ENCODE measurements at regions of chr2 and their contacts with region 1.

Region 1: DNA sequence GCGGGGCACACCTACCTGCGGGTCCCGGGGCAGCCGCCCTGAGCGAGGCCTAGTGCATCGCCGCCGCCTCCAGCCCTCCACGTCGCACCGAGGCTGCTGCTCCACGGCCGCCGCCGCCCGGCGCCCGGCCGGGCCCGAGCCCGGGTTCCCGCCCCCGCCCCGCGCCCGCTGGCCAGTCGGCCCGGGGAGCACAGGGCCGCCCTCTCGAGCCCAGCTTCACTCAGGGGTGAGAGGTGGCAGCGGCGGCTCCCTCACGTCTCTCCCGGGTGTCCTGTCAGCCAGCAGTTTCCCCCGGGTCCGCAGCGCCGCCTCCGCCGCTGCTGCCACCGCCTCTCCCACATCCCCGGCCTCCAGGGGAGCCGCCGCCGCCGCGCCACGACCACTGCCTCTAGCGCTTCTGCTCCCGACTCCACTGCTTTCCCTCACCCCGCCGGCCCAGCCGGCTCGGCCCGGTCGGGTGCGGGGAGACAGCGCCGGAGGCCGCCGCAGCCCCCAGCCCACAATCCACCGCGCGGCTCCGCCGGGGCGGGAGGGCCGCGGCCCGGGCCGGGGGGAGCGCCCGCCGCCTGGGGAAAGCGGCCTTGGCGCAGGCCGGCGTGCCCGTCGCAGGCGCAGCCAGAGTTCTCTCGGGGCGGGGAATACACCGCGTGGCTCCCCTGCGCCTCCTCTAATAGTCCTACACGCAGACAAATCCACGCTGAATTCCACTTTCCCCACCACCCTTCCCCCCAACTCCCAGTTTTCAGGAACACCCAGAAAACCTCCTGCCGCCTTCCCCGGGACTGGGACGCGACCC is at the start of gene VPS54:
- DNase-seq: peak; percentile 65 to 81 (median 80)
- ATAC-seq: peak; percentile 91
- H3K4me3 ChIP-seq: peak within 1 kb of the TSS; percentile 68
- H3K27ac ChIP-seq: peak within 1 kb of the TSS; percentile 89
- H3K4me1 ChIP-seq: peaks cover 12 to 19% of the 10 kb centered on the region in 2 experiments
- H3K27me3 ChIP-seq: no peaks in the 10 kb centered on the region
- CTCF ChIP-seq: no peak
- EP300 ChIP-seq: no peak
- POLR2A ChIP-seq: peak; percentile 73
- RAD21 ChIP-seq: no peak
- polyA plus RNA-seq, gene VPS54: 4.9 to 6.1 TPM

Region 2: GRCh38 chr2:63841254-63842022 is 177.7 kb before region 1 on chr2 and contains the start of gene UGP2:
- CTCF ChIA-PET with region 1: no interaction called
- POLR2A ChIA-PET with region 1: no interaction called
- in situ Hi-C with region 1: no loop called
- intact Hi-C with region 1: loop called (anchors 5 kb)
- DNase-seq: peak; percentile 81 to 93 (median 84)
- ATAC-seq: peak; percentile 89
- H3K4me3 ChIP-seq: peak within 1 kb of the TSS; percentile 80
- H3K27ac ChIP-seq: peak within 1 kb of the TSS; percentile 96
- H3K4me1 ChIP-seq: peaks cover 10 to 18% of the 10 kb centered on the region in 2 experiments
- H3K27me3 ChIP-seq: no peaks in the 10 kb centered on the region
- CTCF ChIP-seq: peak in 2 of 3 experiments; percentile 10 to 36; a peak in 3 of 6 replicates
- EP300 ChIP-seq: no peak
- POLR2A ChIP-seq: peak; percentile 75
- RAD21 ChIP-seq: 0 out of 4 replicates have a peak, but pooled peaks of 1 of the 2 experiments have one; percentile 13
- polyA plus RNA-seq, gene UGP2: 58.9 to 59.6 TPM

Region 3: GRCh38 chr2:63977904-63978303 is 41.2 kb before region 1 on chr2:
- CTCF ChIA-PET with region 1: no interaction called
- POLR2A ChIA-PET with region 1: no interaction called
- in situ Hi-C with region 1: no loop called
- intact Hi-C with region 1: no loop called
- DNase-seq: no peak
- ATAC-seq: no peak
- H3K4me3 ChIP-seq: no peak overlapping the region
- H3K27ac ChIP-seq: no peak overlapping the region
- H3K4me1 ChIP-seq: no peaks in the 10 kb centered on the region; a peak in 1 of 5 replicates
- H3K27me3 ChIP-seq: no peaks in the 10 kb centered on the region
- CTCF ChIP-seq: no peak
- EP300 ChIP-seq: no peak
- POLR2A ChIP-seq: no peak
- RAD21 ChIP-seq: no peak

Region 4: DNA sequence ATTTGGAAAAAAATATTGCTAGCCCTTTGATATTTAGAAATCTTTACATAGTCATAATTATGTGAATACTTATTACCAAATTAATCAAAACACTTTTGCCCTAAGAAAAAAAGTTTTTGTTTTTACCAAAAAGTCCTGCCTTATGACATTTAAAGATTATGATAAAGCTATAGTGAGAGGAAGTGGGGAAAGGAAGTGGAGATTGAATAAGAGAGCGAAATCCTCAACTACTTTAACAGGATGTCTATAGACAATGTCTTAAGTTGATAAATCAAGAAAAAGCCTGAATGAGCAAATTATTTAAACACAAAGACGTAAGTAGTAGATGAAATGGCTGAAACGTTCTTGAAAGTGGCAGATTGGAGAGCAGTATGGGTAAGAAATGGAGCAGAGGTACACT is 21.0 kb after region 1 on chr2:
- CTCF ChIA-PET with region 1: no interaction called
- POLR2A ChIA-PET with region 1: no interaction called
- in situ Hi-C with region 1: no loop called
- intact Hi-C with region 1: no loop called
- DNase-seq: no peak
- ATAC-seq: no peak
- H3K4me3 ChIP-seq: no peak overlapping the region
- H3K27ac ChIP-seq: no peak overlapping the region
- H3K4me1 ChIP-seq: no peaks in the 10 kb centered on the region; a peak in 1 of 5 replicates
- H3K27me3 ChIP-seq: no peaks in the 10 kb centered on the region
- CTCF ChIP-seq: no peak
- EP300 ChIP-seq: no peak
- POLR2A ChIP-seq: no peak
- RAD21 ChIP-seq: no peak

Region 5: GRCh38 chr2:64792307-64792706 is 773.2 kb after region 1 on chr2:
- CTCF ChIA-PET with region 1: no interaction called
- POLR2A ChIA-PET with region 1: no interaction called
- in situ Hi-C with region 1: no loop called
- intact Hi-C with region 1: no loop called
- DNase-seq: peak in 2 of 4 experiments; percentile 19 to 30
- ATAC-seq: peak; percentile 77
- H3K4me3 ChIP-seq: no peak overlapping the region
- H3K27ac ChIP-seq: no peak overlapping the region
- H3K4me1 ChIP-seq: peaks cover 6 to 8% of the 10 kb centered on the region in 2 experiments; a peak in 2 of 5 replicates
- H3K27me3 ChIP-seq: peaks cover 0 to 11% of the 10 kb centered on the region in 2 experiments; a peak in 4 of 5 replicates
- CTCF ChIP-seq: peak; percentile 33 to 55 (median 34); a peak in 3 of 6 replicates
- EP300 ChIP-seq: no peak
- POLR2A ChIP-seq: no peak
- RAD21 ChIP-seq: peak in 1 of 2 experiments; percentile 47; a peak in 2 of 4 replicates

Measured in K562 (cell line).